ENCODE measurements at regions of chr17 and their contacts with region 1.

Region 1: GRCh38 chr17:143782-144281 is 6.5 kb downstream of the SCGB1C2 start:
- DNase-seq: peak; percentile 91
- ATAC-seq: peak; percentile 85

Region 2: GRCh38 chr17:182050-182751 is 38.4 kb after region 1 on chr17:
- intact Hi-C with region 1: no loop called
- DNase-seq: no peak
- ATAC-seq: no peak

Region 3: GRCh38 chr17:385926-386876 is 242.4 kb after region 1 on chr17:
- intact Hi-C with region 1: loop called (anchors 2 kb)
- DNase-seq: peak; percentile 92
- ATAC-seq: peak; percentile 82

Region 4: GRCh38 chr17:688100-688989 is 544.5 kb after region 1 on chr17:
- intact Hi-C with region 1: loop called (anchors 5 kb)
- DNase-seq: no peak
- ATAC-seq: no peak

Region 5: GRCh38 chr17:700504-701094 is 556.8 kb after region 1 on chr17:
- intact Hi-C with region 1: loop called (anchors 5 kb)
- DNase-seq: no peak
- ATAC-seq: no peak

Region 6: GRCh38 chr17:996554-997344 is 852.9 kb after region 1 on chr17 and contains the start of gene TIMM22:
- intact Hi-C with region 1: loop called (anchors 5 kb)
- DNase-seq: peak; percentile 96
- ATAC-seq: peak; percentile 96
- total RNA-seq, gene TIMM22: 17.3 TPM

Measured in Right ventricle myocardium inferior (tissue), 1 donor.